Activated T-helper 2 cell treated with anti-CD3 and anti-CD28 coated beads, Interferon-gamma antibody, Interleukin-2, Interleukin-4, amounts not matched to agents 10 μg/mL and 5 μg/mL and 100 μg/mL, durations not matched to agents 14 hours and 24 hours and 36 hours (primary cell): ENCODE measurements at regions of chr9 and their contacts with region 1.

Region 1: GRCh38 chr9:36551129-36551528 is 21.6 kb upstream of the MELK start:
- DNase-seq: no peak
- H3K4me3 Mint-ChIP-seq: no peak overlapping the region
- H3K27ac Mint-ChIP-seq: no peak overlapping the region
- H3K4me1 Mint-ChIP-seq: peaks cover 1% of the 10 kb centered on the region
- H3K27me3 Mint-ChIP-seq: peaks cover 15% of the 10 kb centered on the region

Region 2: DNA sequence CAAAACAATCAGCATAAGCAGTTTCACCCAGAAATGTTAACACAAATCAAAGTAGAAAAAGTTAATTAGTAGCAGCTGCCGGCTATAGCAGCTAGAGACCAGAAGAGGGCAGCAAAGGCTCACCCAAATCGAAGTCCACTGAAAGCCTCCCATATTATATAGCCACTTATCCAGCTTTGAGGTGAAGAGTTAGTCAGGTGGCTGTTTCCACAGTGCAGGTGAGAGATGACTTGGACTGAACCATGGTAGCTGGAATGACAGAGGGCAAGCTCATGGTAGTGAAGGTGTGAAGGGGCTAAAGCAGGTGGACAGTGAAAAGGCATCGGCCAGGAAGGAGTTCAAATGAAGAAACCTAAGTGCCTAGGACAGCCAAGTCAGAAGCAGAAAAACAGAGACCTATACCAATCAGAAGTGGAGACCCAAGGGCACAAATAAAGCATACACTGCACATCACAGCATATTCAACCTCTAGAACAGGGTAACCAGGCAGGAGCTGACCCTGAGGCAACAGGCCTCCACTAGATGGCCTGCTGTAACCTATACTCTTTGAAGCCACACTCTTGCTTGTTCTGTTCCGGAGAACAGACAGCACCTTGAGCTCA is 143.9 kb before region 1 on chr9:
- intact Hi-C with region 1: loop called (anchors 1 kb)
- DNase-seq: peak; percentile 37
- H3K4me3 Mint-ChIP-seq: no peak overlapping the region
- H3K27ac Mint-ChIP-seq: peak overlapping the region; percentile 27
- H3K4me1 Mint-ChIP-seq: peaks cover 4% of the 10 kb centered on the region
- H3K27me3 Mint-ChIP-seq: no peaks in the 10 kb centered on the region

Region 3: GRCh38 chr9:36450110-36450732 is 100.9 kb before region 1 on chr9:
- intact Hi-C with region 1: loop called (anchors 2 kb)
- DNase-seq: no peak
- H3K4me3 Mint-ChIP-seq: no peak overlapping the region
- H3K27ac Mint-ChIP-seq: no peak overlapping the region
- H3K4me1 Mint-ChIP-seq: peaks cover 8% of the 10 kb centered on the region
- H3K27me3 Mint-ChIP-seq: no peaks in the 10 kb centered on the region